PC-3 (cell line): ENCODE measurements at regions of chr1 and their contacts with region 1.

Region 1: GRCh38 chr1:9164532-9164900 is 35.6 kb upstream of the GPR157 start:
- DNase-seq: no peak
- ATAC-seq: no peak
- H3K4me3 ChIP-seq: no peak overlapping the region
- H3K27ac ChIP-seq: peak overlapping the region; percentile 95
- H3K4me1 ChIP-seq: peaks cover 56% of the 10 kb centered on the region
- H3K27me3 ChIP-seq: no peaks in the 10 kb centered on the region
- CTCF ChIP-seq: no peak

Region 2: GRCh38 chr1:8941906-8942305 is 222.6 kb before region 1 on chr1:
- CTCF ChIA-PET with region 1: no interaction called
- POLR2A ChIA-PET with region 1: no interaction called
- intact Hi-C with region 1: no loop called
- DNase-seq: peak; percentile 79
- ATAC-seq: peak; percentile 95
- H3K4me3 ChIP-seq: no peak overlapping the region
- H3K27ac ChIP-seq: peak overlapping the region; percentile 51
- H3K4me1 ChIP-seq: peaks cover 25% of the 10 kb centered on the region
- H3K27me3 ChIP-seq: no peaks in the 10 kb centered on the region
- CTCF ChIP-seq: no peak

Region 3: GRCh38 chr1:9181176-9181906 is 16.8 kb after region 1 on chr1:
- CTCF ChIA-PET with region 1: interaction called, 4 read pairs
- POLR2A ChIA-PET with region 1: no interaction called
- intact Hi-C with region 1: loop called (anchors 2 kb)
- DNase-seq: peak; percentile 58
- ATAC-seq: peak; percentile 37
- H3K4me3 ChIP-seq: peak overlapping the region; percentile 75
- H3K27ac ChIP-seq: peak overlapping the region; percentile 34
- H3K4me1 ChIP-seq: peaks cover 22% of the 10 kb centered on the region
- H3K27me3 ChIP-seq: no peaks in the 10 kb centered on the region
- CTCF ChIP-seq: peak; percentile 98

Region 4: GRCh38 chr1:9388335-9389180 is 224.0 kb after region 1 on chr1:
- CTCF ChIA-PET with region 1: no interaction called
- POLR2A ChIA-PET with region 1: no interaction called
- intact Hi-C with region 1: no loop called
- DNase-seq: peak; percentile 53
- ATAC-seq: peak; percentile 75
- H3K4me3 ChIP-seq: no peak overlapping the region
- H3K27ac ChIP-seq: no peak overlapping the region
- H3K4me1 ChIP-seq: peaks cover 6% of the 10 kb centered on the region
- H3K27me3 ChIP-seq: no peaks in the 10 kb centered on the region
- CTCF ChIP-seq: no peak